Dendritic cell treated with granulocyte-macrophage colony-stimulating factor and Interleukin-4, amounts not matched to agents 40 ng/mL and 50 ng/mL, for 4 days (primary cell): ENCODE measurements at regions of chr15 and their contacts with region 1.

Region 1: DNA sequence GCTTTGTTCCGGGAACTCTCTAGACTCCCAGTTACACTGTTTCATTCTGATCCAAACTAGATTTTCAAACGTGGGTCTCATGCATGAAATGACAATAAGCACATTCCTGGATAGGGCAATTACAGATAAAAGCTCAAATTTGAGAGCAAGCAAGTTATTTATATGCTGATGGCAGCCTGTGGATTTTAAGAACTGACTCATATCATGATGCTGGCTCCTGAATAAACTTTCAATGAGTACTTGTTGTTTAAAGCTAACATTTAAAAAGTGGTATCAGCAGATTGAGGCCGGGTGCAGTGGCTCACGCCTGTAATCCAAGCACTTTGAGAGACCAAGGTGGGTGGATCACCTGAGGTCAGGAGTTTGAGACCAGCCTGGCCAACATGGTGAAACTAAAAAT is 66.6 kb downstream of the LEO1 start:
- H3K4me3 Mint-ChIP-seq: no peak overlapping the region
- H3K27ac Mint-ChIP-seq: no peak overlapping the region
- H3K4me1 Mint-ChIP-seq: peaks cover 6% of the 10 kb centered on the region
- H3K27me3 Mint-ChIP-seq: no peaks in the 10 kb centered on the region

Region 2: GRCh38 chr15:51924156-51925068 is 19.5 kb after region 1 on chr15:
- intact Hi-C with region 1: no loop called
- H3K4me3 Mint-ChIP-seq: no peak overlapping the region
- H3K27ac Mint-ChIP-seq: no peak overlapping the region
- H3K4me1 Mint-ChIP-seq: no peaks in the 10 kb centered on the region
- H3K27me3 Mint-ChIP-seq: no peaks in the 10 kb centered on the region

Region 3: DNA sequence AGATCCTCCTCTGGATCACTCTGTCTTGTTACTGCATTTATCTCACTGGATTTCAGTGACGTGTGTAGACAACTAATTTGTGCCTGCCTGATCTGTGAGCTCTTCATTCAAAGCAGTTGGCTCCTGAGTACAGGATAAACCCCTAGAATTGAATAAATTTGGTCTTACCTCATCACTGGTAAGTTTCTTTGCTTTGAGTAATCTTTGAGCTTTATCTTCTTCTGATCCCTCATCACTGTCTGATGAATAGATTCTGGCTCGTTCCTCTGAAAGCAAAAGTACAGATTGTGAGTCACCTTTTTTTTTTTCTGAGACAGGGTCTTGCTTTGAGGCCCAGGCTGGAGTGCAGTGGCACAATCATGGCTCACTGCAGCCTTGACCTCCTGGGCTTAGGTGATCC is 42.2 kb after region 1 on chr15:
- intact Hi-C with region 1: loop called (anchors 1 kb)
- H3K4me3 Mint-ChIP-seq: no peak overlapping the region
- H3K27ac Mint-ChIP-seq: no peak overlapping the region
- H3K4me1 Mint-ChIP-seq: no peaks in the 10 kb centered on the region
- H3K27me3 Mint-ChIP-seq: no peaks in the 10 kb centered on the region